ENCODE measurements at regions of chr13 and their contacts with region 1.

Region 1: DNA sequence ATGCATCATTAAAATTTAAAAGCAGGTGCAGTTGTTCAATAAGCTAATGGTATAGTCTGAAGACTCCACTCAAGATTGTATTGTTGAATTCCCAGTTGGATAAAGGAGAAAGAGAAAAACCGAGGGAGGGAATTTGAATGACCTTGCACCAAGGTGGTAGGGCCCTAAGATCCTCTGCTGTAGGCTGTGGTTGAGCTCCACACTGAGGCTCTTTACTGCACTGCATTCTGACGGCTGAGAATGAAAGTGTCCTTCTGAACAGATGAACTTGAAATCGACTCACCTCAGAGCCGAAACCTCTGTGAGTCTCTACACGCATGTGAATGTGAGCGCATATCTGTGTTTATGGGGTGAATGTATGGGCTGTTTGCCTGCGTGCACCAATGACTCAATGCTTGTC is 388.9 kb upstream of the DACH1 start:
- DNase-seq: peak; percentile 51
- H3K4me3 Mint-ChIP-seq: no peak overlapping the region
- H3K27ac Mint-ChIP-seq: no peak overlapping the region
- H3K4me1 Mint-ChIP-seq: no peaks in the 10 kb centered on the region
- H3K27me3 Mint-ChIP-seq: peaks cover 64% of the 10 kb centered on the region
- CTCF ChIP-seq: peak; percentile 85

Region 2: DNA sequence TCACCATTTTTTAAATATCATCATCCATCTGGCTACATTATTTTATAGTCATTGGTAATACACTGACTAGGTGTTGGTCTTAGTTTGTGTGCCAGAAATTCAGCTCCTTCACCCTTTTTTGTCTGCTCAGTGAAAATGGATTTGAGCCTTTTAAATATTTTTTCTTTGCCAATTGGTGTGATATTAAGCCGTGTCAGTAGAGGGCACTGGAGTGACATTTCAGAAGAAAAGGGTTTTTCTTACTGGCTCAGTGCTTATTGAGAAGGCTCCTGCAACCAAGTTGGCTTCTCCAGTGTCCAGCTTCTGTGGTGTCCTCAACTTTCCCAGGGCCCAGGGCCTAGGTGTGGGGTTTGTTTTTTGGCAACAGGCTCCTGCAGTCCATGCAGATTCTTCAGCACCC is 935.5 kb before region 1 on chr13:
- CTCF ChIA-PET with region 1: no interaction called
- POLR2A ChIA-PET with region 1: no interaction called
- intact Hi-C with region 1: loop called (anchors 2 kb)
- DNase-seq: peak; percentile 28
- H3K4me3 Mint-ChIP-seq: no peak overlapping the region
- H3K27ac Mint-ChIP-seq: no peak overlapping the region
- H3K4me1 Mint-ChIP-seq: no peaks in the 10 kb centered on the region
- H3K27me3 Mint-ChIP-seq: peaks cover 83% of the 10 kb centered on the region
- CTCF ChIP-seq: peak; percentile 43

Region 3: GRCh38 chr13:72074663-72075062 is 181.2 kb before region 1 on chr13:
- CTCF ChIA-PET with region 1: no interaction called
- POLR2A ChIA-PET with region 1: no interaction called
- intact Hi-C with region 1: no loop called
- DNase-seq: no peak
- H3K4me3 Mint-ChIP-seq: no peak overlapping the region
- H3K27ac Mint-ChIP-seq: no peak overlapping the region
- H3K4me1 Mint-ChIP-seq: no peaks in the 10 kb centered on the region
- H3K27me3 Mint-ChIP-seq: peaks cover 26% of the 10 kb centered on the region
- CTCF ChIP-seq: no peak

Region 4: GRCh38 chr13:72295153-72295552 is 39.2 kb after region 1 on chr13:
- CTCF ChIA-PET with region 1: no interaction called
- POLR2A ChIA-PET with region 1: no interaction called
- intact Hi-C with region 1: no loop called
- DNase-seq: no peak
- H3K4me3 Mint-ChIP-seq: no peak overlapping the region
- H3K27ac Mint-ChIP-seq: no peak overlapping the region
- H3K4me1 Mint-ChIP-seq: peaks cover 16% of the 10 kb centered on the region
- H3K27me3 Mint-ChIP-seq: peaks cover 10% of the 10 kb centered on the region
- CTCF ChIP-seq: no peak

Measured in MCF 10A (cell line).